Esophagus squamous epithelium (tissue), 5 donors: ENCODE measurements at regions of chr5 and their contacts with region 1.

Region 1: DNA sequence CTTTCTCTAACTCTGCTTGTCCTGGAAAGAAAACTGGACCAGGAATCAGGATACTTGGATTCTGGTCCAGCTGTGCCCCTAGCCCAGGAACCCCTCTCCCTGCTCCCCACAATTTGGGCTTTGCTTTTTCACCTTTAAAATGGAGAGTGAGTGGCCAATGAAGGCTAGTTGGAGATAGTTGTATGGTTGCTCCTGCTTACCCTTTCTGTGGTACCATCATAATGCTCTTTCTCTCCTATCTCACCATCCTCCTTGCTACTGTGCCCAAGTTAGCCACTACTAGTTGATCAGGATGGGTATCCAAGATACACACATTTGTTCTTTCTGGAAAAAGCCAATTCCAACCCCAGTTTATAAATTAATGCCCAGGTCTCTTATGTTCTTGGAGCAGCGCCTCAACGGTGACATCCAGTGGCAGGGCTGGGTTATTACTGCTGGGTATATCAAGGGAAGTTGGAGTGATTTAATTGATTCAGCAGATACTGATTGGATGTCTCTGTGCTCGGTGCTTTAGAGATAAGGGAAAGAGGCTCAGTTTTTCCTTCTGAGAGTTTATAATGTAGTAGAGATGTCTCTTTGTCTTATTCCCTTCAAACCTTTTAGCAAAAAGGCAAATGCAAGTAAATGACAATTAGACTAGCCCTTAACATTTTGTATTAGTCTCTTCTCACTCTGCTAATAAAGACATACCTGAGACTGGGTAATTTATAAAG is 38.6 kb downstream of the FAXDC2 start:
- DNase-seq: no peak
- H3K4me3 ChIP-seq: no peak overlapping the region
- H3K27ac ChIP-seq: no peak overlapping the region
- H3K4me1 ChIP-seq: no peaks in the 10 kb centered on the region
- H3K27me3 ChIP-seq: no peaks in the 10 kb centered on the region
- CTCF ChIP-seq: peak; percentile 81 to 92 (median 87)
- POLR2A ChIP-seq: no peak

Region 2: GRCh38 chr5:154238776-154239481 is 572.9 kb before region 1 on chr5:
- intact Hi-C with region 1: no loop called
- DNase-seq: no peak
- H3K4me3 ChIP-seq: no peak overlapping the region
- H3K27ac ChIP-seq: no peak overlapping the region
- H3K4me1 ChIP-seq: peaks cover 0 to 3% (median 0%) of the 10 kb centered on the region in 3 donors
- H3K27me3 ChIP-seq: no peaks in the 10 kb centered on the region
- CTCF ChIP-seq: no peak
- POLR2A ChIP-seq: no peak

Region 3: DNA sequence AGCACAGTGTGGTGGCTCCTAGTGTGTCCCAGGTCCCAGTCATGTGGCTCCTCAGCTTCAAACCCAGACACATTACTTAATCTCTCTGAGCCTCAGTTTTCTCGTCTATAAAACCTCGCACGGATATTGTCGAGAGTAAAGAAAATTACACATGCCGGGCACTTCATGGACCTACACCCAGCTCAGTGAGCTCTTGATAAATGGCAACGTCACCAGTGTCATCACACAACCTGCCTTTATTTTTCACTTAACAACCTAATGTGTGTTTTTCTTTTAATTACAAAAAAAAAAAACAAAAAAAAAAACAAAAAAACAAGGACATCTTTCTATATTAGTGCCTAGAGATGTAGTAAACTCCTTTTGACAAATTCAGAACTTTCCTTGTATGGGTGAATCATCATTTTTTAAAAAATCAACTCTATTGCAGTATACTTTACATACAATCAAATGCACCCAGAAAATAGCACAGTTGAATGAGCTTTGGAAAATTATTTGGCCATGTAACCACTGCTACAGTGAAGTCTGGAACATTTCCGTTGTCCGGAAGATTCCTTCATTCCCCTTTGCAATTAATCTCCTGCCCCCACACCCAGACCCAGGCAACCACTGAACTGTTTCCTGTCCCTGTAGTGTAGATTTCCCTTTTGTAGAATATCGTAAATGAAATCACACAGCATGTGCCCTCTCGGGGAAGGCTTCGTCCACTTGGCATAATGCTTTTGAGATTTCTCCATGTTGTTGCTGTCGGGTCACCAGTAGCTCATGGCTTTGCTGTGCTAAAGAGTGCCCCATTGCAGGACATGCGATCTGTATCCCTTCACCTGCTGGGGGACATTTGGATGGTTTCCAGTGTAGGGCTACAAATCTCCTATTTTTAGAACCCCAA is 157.1 kb before region 1 on chr5:
- intact Hi-C with region 1: loop called (anchors 5 kb)
- DNase-seq: no peak
- H3K4me3 ChIP-seq: peak overlapping the region in 1 of 4 donors; percentile 3
- H3K27ac ChIP-seq: no peak overlapping the region
- H3K4me1 ChIP-seq: peaks cover 0 to 14% (median 9%) of the 10 kb centered on the region in 3 donors
- H3K27me3 ChIP-seq: no peaks in the 10 kb centered on the region
- CTCF ChIP-seq: no peak
- POLR2A ChIP-seq: no peak

Region 4: DNA sequence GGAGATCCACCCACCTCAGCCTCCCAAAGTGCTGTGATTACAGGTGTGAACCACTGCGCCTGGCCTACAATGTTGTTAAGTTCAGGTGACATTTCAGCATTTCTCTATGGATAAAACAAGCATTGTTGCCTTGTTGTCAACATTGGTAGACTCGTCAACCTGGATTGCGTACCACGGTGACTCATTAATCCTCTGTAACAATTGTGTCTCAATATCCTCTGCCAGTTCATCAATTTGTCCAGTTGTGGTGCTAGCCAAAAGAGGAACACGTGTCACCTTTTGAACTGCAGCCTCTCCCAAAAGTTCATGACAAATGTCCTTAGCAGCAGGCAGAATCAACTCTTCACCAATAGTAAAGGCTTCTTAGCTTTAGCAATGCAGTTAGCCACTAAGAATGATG is 103.0 kb before region 1 on chr5:
- intact Hi-C with region 1: no loop called
- DNase-seq: no peak
- H3K4me3 ChIP-seq: no peak overlapping the region
- H3K27ac ChIP-seq: peak overlapping the region; percentile 21 to 56 (median 36)
- H3K4me1 ChIP-seq: peaks cover 2 to 33% (median 10%) of the 10 kb centered on the region in 3 donors
- H3K27me3 ChIP-seq: no peaks in the 10 kb centered on the region
- CTCF ChIP-seq: peak in 1 of 6 experiments; percentile 9
- POLR2A ChIP-seq: no peak

Region 5: GRCh38 chr5:154754460-154755360 is 57.1 kb before region 1 on chr5:
- intact Hi-C with region 1: loop called (anchors 10 kb)
- DNase-seq: peak; percentile 96
- H3K4me3 ChIP-seq: peak overlapping the region; percentile 75 to 100 (median 89)
- H3K27ac ChIP-seq: peak overlapping the region; percentile 94 to 99 (median 99)
- H3K4me1 ChIP-seq: peaks cover 4 to 44% (median 35%) of the 10 kb centered on the region in 3 donors
- H3K27me3 ChIP-seq: no peaks in the 10 kb centered on the region
- CTCF ChIP-seq: peak in 5 of 6 experiments; percentile 20 to 54 (median 45)
- POLR2A ChIP-seq: peak in 3 of 4 donors; percentile 21 to 81 (median 70)